ENCODE measurements at regions of chr18 and their contacts with region 1.

Region 1: GRCh38 chr18:45974088-45974536 is 7.0 kb upstream of the EPG5 start:
- DNase-seq: peak; percentile 55
- H3K4me3 Mint-ChIP-seq: no peak overlapping the region
- H3K27ac Mint-ChIP-seq: peak overlapping the region; percentile 38
- H3K4me1 Mint-ChIP-seq: peaks cover 23% of the 10 kb centered on the region
- H3K27me3 Mint-ChIP-seq: no peaks in the 10 kb centered on the region

Region 2: GRCh38 chr18:45621061-45621511 is 353.0 kb before region 1 on chr18:
- intact Hi-C with region 1: loop called (anchors 1 kb)
- DNase-seq: no peak
- H3K4me3 Mint-ChIP-seq: no peak overlapping the region
- H3K27ac Mint-ChIP-seq: no peak overlapping the region
- H3K4me1 Mint-ChIP-seq: no peaks in the 10 kb centered on the region
- H3K27me3 Mint-ChIP-seq: peaks cover 17% of the 10 kb centered on the region

Region 3: DNA sequence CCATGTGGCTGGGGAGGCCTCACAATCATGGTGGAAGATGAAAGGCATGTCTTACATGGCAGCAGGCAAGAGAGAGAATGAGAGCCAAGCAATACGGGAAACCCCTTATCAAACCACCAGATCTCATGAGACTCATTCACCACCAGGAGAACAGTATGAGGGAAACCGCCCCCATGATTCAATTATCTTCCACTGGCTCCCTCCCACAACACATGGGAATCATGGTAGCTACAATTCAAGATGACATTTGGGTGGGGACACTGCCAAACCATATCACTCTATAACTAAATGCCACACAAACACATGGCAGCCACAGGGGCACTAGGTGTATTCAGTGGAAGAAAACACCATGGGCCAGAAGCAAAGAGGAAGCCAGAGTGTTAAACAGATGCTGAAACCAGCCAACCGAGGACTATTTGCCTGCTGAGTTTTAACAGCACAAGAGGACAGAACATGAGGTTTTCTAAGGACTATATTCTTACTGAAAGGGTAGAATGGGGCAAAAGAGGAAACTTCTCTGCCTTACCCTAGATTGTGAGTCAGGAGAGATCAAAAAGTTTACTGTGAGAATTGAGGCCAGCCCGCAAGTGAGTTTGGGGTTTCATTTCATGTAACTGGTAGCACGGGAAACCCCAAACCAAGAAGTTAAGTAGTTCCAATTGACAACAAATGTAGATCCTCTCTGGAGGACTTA is 99.5 kb before region 1 on chr18:
- intact Hi-C with region 1: loop called (anchors 2 kb)
- DNase-seq: peak; percentile 38
- H3K4me3 Mint-ChIP-seq: peak overlapping the region; percentile 6
- H3K27ac Mint-ChIP-seq: peak overlapping the region; percentile 89
- H3K4me1 Mint-ChIP-seq: peaks cover 24% of the 10 kb centered on the region
- H3K27me3 Mint-ChIP-seq: no peaks in the 10 kb centered on the region

Region 4: GRCh38 chr18:45920367-45920766 is 53.7 kb before region 1 on chr18:
- intact Hi-C with region 1: loop called (anchors 2 kb)
- DNase-seq: no peak
- H3K4me3 Mint-ChIP-seq: no peak overlapping the region
- H3K27ac Mint-ChIP-seq: no peak overlapping the region
- H3K4me1 Mint-ChIP-seq: peaks cover 1% of the 10 kb centered on the region
- H3K27me3 Mint-ChIP-seq: no peaks in the 10 kb centered on the region

Region 5: DNA sequence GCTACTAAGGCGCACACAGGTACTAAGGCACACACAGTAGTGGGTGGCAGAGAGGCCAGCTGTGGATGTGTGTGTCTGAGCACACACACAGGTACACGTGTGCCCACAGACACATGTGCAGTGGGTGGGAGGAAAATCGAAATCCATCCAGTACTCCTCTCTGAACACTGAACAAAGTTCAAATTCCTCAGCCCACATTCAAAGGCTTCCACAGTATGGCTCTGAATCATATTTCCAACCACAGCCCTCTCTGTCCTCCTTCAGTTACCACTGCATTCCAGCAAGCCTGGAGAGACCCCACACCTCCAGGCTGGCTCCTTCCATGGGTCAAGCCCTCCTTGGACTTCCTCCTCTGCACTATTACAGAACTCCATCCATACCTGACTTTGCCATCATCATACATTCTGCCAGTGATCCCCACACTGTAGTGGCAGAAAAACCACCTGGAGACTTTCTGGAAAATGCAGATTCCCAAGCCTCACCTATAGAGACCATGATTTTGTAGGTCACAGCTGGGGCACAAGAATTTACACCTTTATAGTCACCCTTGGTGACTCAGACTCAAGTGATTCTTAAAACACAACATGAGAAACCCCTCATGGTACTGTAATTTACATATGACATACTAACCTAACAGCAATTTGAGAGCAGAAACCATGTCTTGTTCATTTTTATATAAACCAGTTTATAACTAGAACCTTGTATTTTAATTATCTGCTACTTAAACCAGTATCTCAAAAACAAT is 38.3 kb before region 1 on chr18:
- intact Hi-C with region 1: loop called (anchors 5 kb)
- DNase-seq: no peak
- H3K4me3 Mint-ChIP-seq: no peak overlapping the region
- H3K27ac Mint-ChIP-seq: no peak overlapping the region
- H3K4me1 Mint-ChIP-seq: peaks cover 20% of the 10 kb centered on the region
- H3K27me3 Mint-ChIP-seq: no peaks in the 10 kb centered on the region

Region 6: GRCh38 chr18:45997700-45998151 is 23.6 kb after region 1 on chr18:
- intact Hi-C with region 1: loop called (anchors 2 kb)
- DNase-seq: peak; percentile 27
- H3K4me3 Mint-ChIP-seq: peak overlapping the region; percentile 28
- H3K27ac Mint-ChIP-seq: peak overlapping the region; percentile 85
- H3K4me1 Mint-ChIP-seq: peaks cover 41% of the 10 kb centered on the region
- H3K27me3 Mint-ChIP-seq: no peaks in the 10 kb centered on the region

Region 7: GRCh38 chr18:46080156-46080555 is 106.0 kb after region 1 on chr18:
- intact Hi-C with region 1: no loop called
- DNase-seq: no peak
- H3K4me3 Mint-ChIP-seq: no peak overlapping the region
- H3K27ac Mint-ChIP-seq: no peak overlapping the region
- H3K4me1 Mint-ChIP-seq: no peaks in the 10 kb centered on the region
- H3K27me3 Mint-ChIP-seq: no peaks in the 10 kb centered on the region

Region 8: GRCh38 chr18:46190667-46191066 is 216.6 kb after region 1 on chr18:
- intact Hi-C with region 1: no loop called
- DNase-seq: no peak
- H3K4me3 Mint-ChIP-seq: no peak overlapping the region
- H3K27ac Mint-ChIP-seq: no peak overlapping the region
- H3K4me1 Mint-ChIP-seq: peaks cover 15% of the 10 kb centered on the region
- H3K27me3 Mint-ChIP-seq: no peaks in the 10 kb centered on the region

Measured in activated T-helper 2 cell treated with anti-CD3 and anti-CD28 coated beads, Interferon-gamma antibody, Interleukin-2, Interleukin-4, amounts not matched to agents 10 μg/mL and 5 μg/mL and 100 μg/mL, durations not matched to agents 14 hours and 24 hours and 36 hours (primary cell).